ENCODE measurements at regions of chr22 and their contacts with region 1.

Region 1: DNA sequence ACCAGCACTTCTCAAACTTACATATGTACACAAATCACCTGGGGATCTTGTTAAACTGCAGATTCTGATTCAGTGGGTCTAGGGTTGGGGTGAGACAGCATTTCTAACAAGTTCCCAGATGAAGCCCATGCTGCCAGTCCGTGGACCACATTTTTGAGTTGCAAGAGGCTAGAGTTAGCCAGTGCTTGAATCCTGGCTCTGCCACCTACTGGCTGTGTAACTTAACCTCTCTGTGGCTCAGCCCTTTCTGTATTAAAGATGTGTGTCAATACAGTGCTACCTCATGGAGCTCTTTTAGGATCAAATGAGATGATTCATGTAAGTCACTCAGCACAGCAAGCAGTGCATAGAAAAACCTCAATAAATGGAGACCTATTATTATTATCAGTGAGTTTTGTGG is 90.2 kb upstream of the ISX start:
- DNase-seq: no peak
- H3K4me3 ChIP-seq: no peak overlapping the region
- CTCF ChIP-seq: no peak
- POLR2A ChIP-seq: no peak

Region 2: GRCh38 chr22:34669001-34669400 is 306.7 kb before region 1 on chr22:
- intact Hi-C with region 1: no loop called
- DNase-seq: no peak
- H3K4me3 ChIP-seq: no peak overlapping the region
- CTCF ChIP-seq: no peak
- POLR2A ChIP-seq: no peak

Region 3: DNA sequence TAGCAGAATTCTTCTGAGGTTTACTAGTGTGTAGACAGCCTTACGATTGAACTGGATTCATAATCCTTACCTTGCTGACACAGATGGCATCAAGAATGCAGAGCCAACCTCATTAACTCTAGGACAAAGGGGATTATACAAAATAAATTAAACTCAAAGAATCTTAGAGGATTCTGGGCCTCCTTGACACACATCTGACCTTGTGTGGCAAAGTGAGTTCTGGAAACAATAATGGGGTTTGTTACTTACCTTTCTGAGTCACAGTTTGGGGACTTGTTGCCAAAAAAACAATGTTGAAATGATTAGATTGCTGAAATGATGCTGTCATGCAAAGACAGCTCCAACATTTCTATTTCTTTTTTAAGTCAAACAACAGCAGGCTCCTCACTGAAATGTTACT is 88.9 kb before region 1 on chr22:
- intact Hi-C with region 1: loop called (anchors 1 kb)
- DNase-seq: no peak
- H3K4me3 ChIP-seq: no peak overlapping the region
- CTCF ChIP-seq: no peak
- POLR2A ChIP-seq: no peak

Region 4: GRCh38 chr22:34950489-34950888 is 25.2 kb before region 1 on chr22:
- intact Hi-C with region 1: no loop called
- DNase-seq: no peak
- H3K4me3 ChIP-seq: no peak overlapping the region
- CTCF ChIP-seq: no peak
- POLR2A ChIP-seq: no peak